ENCODE measurements at regions of chr16 and their contacts with region 1.

Region 1: GRCh38 chr16:8936421-8936820 is 27.3 kb downstream of the USP7 start:
- DNase-seq: peak; percentile 83
- ATAC-seq: peak; percentile 99
- H3K4me3 Mint-ChIP-seq: no peak overlapping the region
- H3K27ac Mint-ChIP-seq: no peak overlapping the region
- H3K4me1 Mint-ChIP-seq: peaks cover 58% of the 10 kb centered on the region
- H3K27me3 Mint-ChIP-seq: no peaks in the 10 kb centered on the region

Region 2: DNA sequence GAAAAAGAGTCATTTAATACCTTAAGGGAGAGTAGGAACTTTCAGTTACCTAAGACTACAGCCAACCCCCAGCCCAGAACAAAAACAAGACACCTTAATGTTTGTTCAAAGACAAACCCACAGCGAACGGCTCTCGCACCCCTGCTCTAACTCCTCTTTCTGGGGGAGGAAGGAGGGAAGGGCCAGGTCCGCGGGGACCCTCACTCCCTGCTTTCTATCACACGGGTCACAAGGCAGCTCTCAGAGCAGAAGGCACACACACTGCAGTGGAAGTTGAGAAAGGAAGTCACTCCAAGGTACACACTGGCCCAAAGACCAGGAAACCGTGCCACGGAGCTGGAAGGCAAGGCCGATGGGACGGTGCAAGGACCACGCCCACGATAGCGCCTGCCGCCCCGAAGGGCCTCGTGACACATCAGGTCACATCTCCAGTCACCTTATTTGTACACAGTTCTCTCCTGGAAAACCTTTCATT is 44.3 kb before region 1 on chr16:
- CTCF ChIA-PET with region 1: interaction called, 11 read pairs
- POLR2A ChIA-PET with region 1: no interaction called
- DNase-seq: no peak
- ATAC-seq: no peak
- H3K4me3 Mint-ChIP-seq: no peak overlapping the region
- H3K27ac Mint-ChIP-seq: peak overlapping the region; percentile 49
- H3K4me1 Mint-ChIP-seq: no peaks in the 10 kb centered on the region
- H3K27me3 Mint-ChIP-seq: no peaks in the 10 kb centered on the region

Region 3: DNA sequence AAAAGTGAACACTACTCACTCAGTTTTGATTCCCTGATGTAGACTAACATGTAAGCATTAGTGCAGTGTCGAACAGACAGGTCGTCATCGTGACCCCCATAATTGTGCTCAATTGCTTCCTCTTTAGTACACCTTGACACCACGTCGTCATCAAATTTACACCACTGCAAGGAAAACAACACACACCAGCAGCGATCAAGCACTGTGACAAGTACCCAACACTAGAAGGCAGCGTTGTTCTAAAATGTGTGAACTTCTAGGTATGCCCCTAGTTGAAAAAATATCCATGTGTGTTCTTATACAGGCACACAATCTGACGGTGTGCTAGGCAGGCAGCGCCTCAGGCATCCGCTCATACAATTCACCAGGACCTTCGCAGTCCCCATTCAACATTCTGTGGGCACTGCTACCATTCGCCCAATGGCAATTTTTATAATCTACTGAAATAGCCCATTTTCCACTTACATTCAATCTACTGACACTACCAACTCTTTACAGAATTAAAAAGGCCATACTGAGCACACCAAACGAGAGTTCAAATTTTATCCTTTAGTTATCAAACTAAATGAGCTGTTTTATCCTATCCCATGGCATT is 31.2 kb before region 1 on chr16:
- CTCF ChIA-PET with region 1: interaction called, 30 read pairs
- POLR2A ChIA-PET with region 1: no interaction called
- DNase-seq: peak; percentile 41
- ATAC-seq: peak; percentile 68
- H3K4me3 Mint-ChIP-seq: no peak overlapping the region
- H3K27ac Mint-ChIP-seq: no peak overlapping the region
- H3K4me1 Mint-ChIP-seq: peaks cover 14% of the 10 kb centered on the region
- H3K27me3 Mint-ChIP-seq: no peaks in the 10 kb centered on the region

Region 4: GRCh38 chr16:8920645-8921346 is 15.6 kb before region 1 on chr16:
- CTCF ChIA-PET with region 1: interaction called, 24 read pairs
- POLR2A ChIA-PET with region 1: interaction called, 3 read pairs
- DNase-seq: no peak
- ATAC-seq: no peak
- H3K4me3 Mint-ChIP-seq: no peak overlapping the region
- H3K27ac Mint-ChIP-seq: no peak overlapping the region
- H3K4me1 Mint-ChIP-seq: peaks cover 62% of the 10 kb centered on the region
- H3K27me3 Mint-ChIP-seq: no peaks in the 10 kb centered on the region

Region 5: GRCh38 chr16:8958344-8959167 is 22.1 kb after region 1 on chr16:
- CTCF ChIA-PET with region 1: interaction called, 23 read pairs
- POLR2A ChIA-PET with region 1: interaction called, 8 read pairs
- DNase-seq: peak; percentile 55
- ATAC-seq: peak; percentile 43
- H3K4me3 Mint-ChIP-seq: peak overlapping the region; percentile 84
- H3K27ac Mint-ChIP-seq: peak overlapping the region; percentile 90
- H3K4me1 Mint-ChIP-seq: peaks cover 73% of the 10 kb centered on the region
- H3K27me3 Mint-ChIP-seq: no peaks in the 10 kb centered on the region

Region 6: GRCh38 chr16:8971416-8971815 is 35.0 kb after region 1 on chr16:
- CTCF ChIA-PET with region 1: no interaction called
- POLR2A ChIA-PET with region 1: no interaction called
- DNase-seq: no peak
- ATAC-seq: no peak
- H3K4me3 Mint-ChIP-seq: no peak overlapping the region
- H3K27ac Mint-ChIP-seq: no peak overlapping the region
- H3K4me1 Mint-ChIP-seq: no peaks in the 10 kb centered on the region
- H3K27me3 Mint-ChIP-seq: peaks cover 6% of the 10 kb centered on the region

Region 7: DNA sequence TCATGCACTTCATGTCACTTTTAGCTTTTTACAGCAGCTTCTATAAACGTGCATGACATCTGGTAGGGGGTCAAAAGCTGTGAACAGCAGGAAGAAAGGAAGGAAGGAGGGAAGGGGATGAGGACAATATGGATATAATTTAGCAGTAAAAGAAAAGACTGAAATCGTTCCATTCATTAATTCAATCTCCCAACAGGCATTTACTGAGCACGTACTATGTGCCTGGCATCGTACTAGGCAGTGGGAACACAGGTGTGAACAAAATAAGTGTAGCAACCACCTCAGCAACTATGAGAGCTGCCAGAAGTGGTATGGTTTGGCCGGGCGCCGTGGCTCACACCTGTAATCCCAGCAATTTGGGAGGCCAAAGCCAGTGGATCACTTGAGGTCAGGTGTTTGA is 46.4 kb after region 1 on chr16:
- CTCF ChIA-PET with region 1: no interaction called
- POLR2A ChIA-PET with region 1: no interaction called
- DNase-seq: no peak
- ATAC-seq: no peak
- H3K4me3 Mint-ChIP-seq: no peak overlapping the region
- H3K27ac Mint-ChIP-seq: no peak overlapping the region
- H3K4me1 Mint-ChIP-seq: no peaks in the 10 kb centered on the region
- H3K27me3 Mint-ChIP-seq: no peaks in the 10 kb centered on the region

Region 8: GRCh38 chr16:9016824-9017223 is 80.4 kb after region 1 on chr16:
- CTCF ChIA-PET with region 1: no interaction called
- POLR2A ChIA-PET with region 1: no interaction called
- DNase-seq: no peak
- ATAC-seq: no peak
- H3K4me3 Mint-ChIP-seq: no peak overlapping the region
- H3K27ac Mint-ChIP-seq: no peak overlapping the region
- H3K4me1 Mint-ChIP-seq: peaks cover 3% of the 10 kb centered on the region
- H3K27me3 Mint-ChIP-seq: peaks cover 7% of the 10 kb centered on the region

Region 9: GRCh38 chr16:9027070-9027795 is 90.8 kb after region 1 on chr16:
- CTCF ChIA-PET with region 1: no interaction called
- POLR2A ChIA-PET with region 1: no interaction called
- DNase-seq: no peak
- ATAC-seq: no peak
- H3K4me3 Mint-ChIP-seq: no peak overlapping the region
- H3K27ac Mint-ChIP-seq: no peak overlapping the region
- H3K4me1 Mint-ChIP-seq: no peaks in the 10 kb centered on the region
- H3K27me3 Mint-ChIP-seq: peaks cover 2% of the 10 kb centered on the region